Natural killer cell (primary cell): ENCODE measurements at regions of chr16 and their contacts with region 1.

Region 1: DNA sequence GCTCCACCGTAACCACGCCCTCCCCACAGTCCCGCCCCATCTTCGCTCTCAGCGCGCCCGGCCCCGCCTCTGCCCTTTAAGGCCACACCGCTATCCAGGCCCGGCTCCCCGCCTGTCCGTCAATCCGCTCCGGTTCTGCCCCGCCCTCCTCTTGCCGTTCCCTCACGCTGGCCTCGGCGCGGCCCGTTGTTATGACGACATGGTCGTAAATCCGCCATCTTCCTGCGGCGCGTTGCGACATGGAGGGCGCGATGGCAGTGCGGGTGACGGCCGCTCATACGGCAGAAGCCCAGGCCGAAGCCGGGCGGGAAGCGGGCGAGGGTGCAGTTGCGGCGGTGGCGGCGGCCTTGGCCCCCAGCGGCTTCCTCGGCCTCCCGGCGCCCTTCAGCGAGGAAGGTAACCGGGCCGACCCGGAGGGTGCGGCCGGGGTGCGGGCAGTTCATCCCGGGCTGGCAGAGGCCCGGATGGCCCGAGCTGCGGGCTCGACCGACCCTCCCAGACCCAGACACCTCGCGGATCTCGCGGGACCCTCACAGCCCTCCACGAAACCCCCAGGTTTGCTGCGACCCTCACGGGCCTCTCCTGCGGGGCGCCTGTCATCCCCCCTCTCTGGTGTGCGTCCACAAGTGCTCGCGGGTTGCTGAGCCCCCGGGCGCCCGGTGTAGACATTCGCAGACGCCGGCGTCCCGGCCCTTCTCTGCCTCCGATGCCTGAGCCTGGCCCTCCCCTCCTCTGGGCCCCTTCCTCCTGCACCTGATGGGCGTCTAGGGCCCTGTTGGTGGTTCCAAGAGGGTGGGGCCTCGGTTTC is at the start of gene E4F1:
- DNase-seq: peak; percentile 96 to 99
- ATAC-seq: peak; percentile 97 to 100 (median 97)
- H3K4me3 ChIP-seq: peak within 1 kb of the TSS; percentile 97
- H3K4me3 Mint-ChIP-seq: peak within 1 kb of the TSS; percentile 87
- H3K27ac ChIP-seq: peak within 1 kb of the TSS; percentile 82
- H3K27ac Mint-ChIP-seq: peak within 1 kb of the TSS; percentile 63 to 88
- H3K4me1 ChIP-seq: peaks cover 22% of the 10 kb centered on the region
- H3K4me1 Mint-ChIP-seq: peaks cover 0 to 24% of the 10 kb centered on the region in 2 donors
- H3K27me3 ChIP-seq: no peaks in the 10 kb centered on the region
- H3K27me3 Mint-ChIP-seq: no peaks in the 10 kb centered on the region
- CTCF ChIP-seq: no peak
- total RNA-seq, gene E4F1: 43.6 to 45.7 (median 45.7) TPM

Region 2: GRCh38 chr16:401468-402348 is 1821.9 kb before region 1 on chr16 and contains the start of gene DECR2:
- intact Hi-C with region 1: no loop called
- DNase-seq: peak; percentile 95 to 97
- ATAC-seq: peak; percentile 89 to 97 (median 91)
- H3K4me3 ChIP-seq: peak within 1 kb of the TSS; percentile 87
- H3K4me3 Mint-ChIP-seq: peak within 1 kb of the TSS; percentile 88
- H3K27ac ChIP-seq: peak within 1 kb of the TSS; percentile 87
- H3K27ac Mint-ChIP-seq: peak within 1 kb of the TSS; percentile 80 to 89
- H3K4me1 ChIP-seq: peaks cover 32% of the 10 kb centered on the region
- H3K4me1 Mint-ChIP-seq: peaks cover 10 to 20% of the 10 kb centered on the region in 2 donors
- H3K27me3 ChIP-seq: no peaks in the 10 kb centered on the region
- H3K27me3 Mint-ChIP-seq: no peaks in the 10 kb centered on the region
- CTCF ChIP-seq: peak; percentile 64
- total RNA-seq, gene DECR2: 9.5 to 13.0 (median 12.9) TPM

Region 3: DNA sequence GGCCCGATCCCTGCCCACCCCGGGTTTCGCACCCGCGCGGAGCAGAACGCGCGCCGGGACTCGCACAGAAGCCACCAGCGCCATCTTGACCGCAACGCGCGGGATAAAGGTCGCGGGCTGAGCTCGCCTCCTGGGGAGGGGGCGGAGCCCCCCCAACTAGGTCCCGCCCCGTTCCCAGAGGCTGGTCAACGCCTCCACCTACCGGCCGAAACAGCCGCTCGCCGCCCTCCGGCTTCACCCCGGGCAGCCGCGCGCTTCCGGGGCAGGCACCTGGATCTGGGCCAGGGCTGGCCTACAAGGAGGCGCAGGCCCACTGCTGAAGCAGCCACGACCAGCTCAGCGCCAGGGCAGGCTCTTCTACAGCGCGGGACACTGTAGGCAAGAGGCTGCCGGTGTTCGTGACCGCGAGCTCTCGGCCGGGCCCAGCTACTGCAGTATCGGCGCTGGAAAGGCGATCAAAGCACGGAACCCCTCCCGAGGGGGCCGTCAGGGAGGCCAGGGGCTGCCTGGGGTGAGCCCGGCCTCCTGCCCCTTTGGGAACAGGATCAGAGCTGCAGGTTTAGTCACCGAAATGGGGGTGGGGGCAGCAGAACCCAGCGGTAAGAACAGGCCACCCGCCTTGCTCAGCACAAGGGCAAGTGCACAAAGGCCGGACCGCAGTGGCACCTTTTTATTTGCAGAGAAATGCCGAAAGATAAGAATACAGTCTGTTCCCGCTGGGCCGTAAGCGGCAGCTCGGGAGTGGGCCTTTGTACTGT is 28.1 kb after region 1 on chr16 and contains the start of gene ECI1:
- intact Hi-C with region 1: loop called (anchors 1 kb)
- DNase-seq: peak; percentile 80 to 87
- ATAC-seq: peak; percentile 89 to 95 (median 89)
- H3K4me3 ChIP-seq: peak within 1 kb of the TSS; percentile 61
- H3K4me3 Mint-ChIP-seq: peak within 1 kb of the TSS; percentile 90
- H3K27ac ChIP-seq: peak within 1 kb of the TSS; percentile 71
- H3K27ac Mint-ChIP-seq: peak within 1 kb of the TSS; percentile 81 to 85
- H3K4me1 ChIP-seq: peaks cover 19% of the 10 kb centered on the region
- H3K4me1 Mint-ChIP-seq: peaks cover 0 to 11% of the 10 kb centered on the region in 2 donors
- H3K27me3 ChIP-seq: no peaks in the 10 kb centered on the region
- H3K27me3 Mint-ChIP-seq: no peaks in the 10 kb centered on the region
- CTCF ChIP-seq: peak; percentile 38
- total RNA-seq, gene ECI1: 14.6 to 19.2 (median 19.0) TPM

Region 4: DNA sequence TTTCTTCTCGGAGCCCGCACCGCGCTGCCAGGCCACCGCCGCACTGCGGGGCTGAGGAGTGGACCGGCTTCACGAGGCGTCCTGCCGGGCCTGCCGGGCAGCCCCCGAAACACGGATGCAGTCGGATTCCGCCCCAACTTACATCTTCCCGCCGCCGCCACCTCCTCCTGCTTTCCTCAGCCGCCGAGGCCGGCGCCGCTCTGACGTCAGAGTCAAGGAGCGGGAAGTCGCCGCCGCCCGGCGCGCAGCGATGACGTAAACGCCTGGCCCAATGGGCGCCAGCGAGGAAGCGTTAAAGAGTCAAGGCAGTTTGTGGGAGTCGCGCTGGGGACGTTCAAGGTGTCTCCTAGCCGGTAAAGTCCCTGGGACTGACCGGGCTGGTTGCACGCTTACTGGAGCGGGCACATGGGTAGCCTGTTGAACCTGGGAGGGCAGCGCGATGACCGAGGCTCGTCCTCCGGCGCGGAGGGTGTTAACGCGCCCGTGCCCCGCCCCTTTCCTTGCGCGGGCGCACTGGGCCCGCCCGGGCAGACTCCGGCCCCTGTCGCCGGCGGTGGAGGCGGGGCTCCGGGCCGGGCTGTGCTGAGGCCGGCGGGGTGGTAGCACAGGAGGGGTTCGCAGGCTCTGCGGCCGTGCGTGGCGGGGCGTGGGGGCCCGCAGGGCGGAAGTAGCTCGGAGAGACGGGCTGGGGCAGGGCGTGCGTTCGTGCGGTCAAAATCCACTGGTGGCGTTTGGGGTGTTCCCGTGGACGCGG is 44.5 kb after region 1 on chr16 and contains the start of gene RNPS1:
- intact Hi-C with region 1: loop called (anchors 5 kb)
- DNase-seq: peak; percentile 99
- ATAC-seq: peak; percentile 87 to 94 (median 88)
- H3K4me3 ChIP-seq: peak within 1 kb of the TSS; percentile 87
- H3K4me3 Mint-ChIP-seq: peak within 1 kb of the TSS; percentile 97
- H3K27ac ChIP-seq: peak within 1 kb of the TSS; percentile 99
- H3K27ac Mint-ChIP-seq: peak within 1 kb of the TSS; percentile 97 to 99
- H3K4me1 ChIP-seq: peaks cover 38% of the 10 kb centered on the region
- H3K4me1 Mint-ChIP-seq: peaks cover 40 to 50% of the 10 kb centered on the region in 2 donors
- H3K27me3 ChIP-seq: no peaks in the 10 kb centered on the region
- H3K27me3 Mint-ChIP-seq: no peaks in the 10 kb centered on the region
- CTCF ChIP-seq: no peak
- total RNA-seq, gene RNPS1: 269 to 284 (median 273) TPM